ENCODE measurements at regions of chr2 and their contacts with region 1.

Region 1: DNA sequence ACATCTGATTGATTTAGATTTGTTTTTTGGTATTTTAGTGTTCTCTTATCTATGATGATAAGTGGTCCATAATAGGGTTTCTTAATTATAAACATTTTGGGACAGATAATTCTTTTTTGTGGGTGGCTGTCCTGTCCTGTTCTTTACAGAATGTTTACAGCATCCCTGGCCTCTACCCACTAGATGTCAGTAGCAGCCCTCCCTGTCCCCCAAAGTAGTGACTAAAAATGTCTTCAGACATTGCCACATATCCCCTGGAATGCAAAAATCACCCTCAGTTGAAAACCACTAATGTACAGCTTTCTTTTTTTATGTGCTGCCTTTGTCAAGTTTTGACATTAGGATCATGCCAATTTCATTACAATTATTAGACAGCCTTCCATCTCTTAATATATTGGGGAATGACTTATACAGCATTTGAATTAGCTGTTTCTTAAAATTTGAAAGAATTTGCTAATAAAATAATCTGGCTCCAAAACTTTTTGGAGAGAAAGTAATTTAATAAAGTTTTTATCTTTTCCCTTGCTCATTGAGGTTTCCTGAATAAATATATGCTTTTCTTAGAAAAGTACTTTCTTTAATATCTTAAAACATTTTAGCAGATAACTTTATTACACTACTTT is 19.5 kb downstream of the WIPF1 start:
- DNase-seq: no peak
- H3K4me3 ChIP-seq: no peak overlapping the region
- H3K27ac ChIP-seq: peak overlapping the region in 3 of 8 donors; percentile 4 to 34 (median 16)
- H3K4me1 ChIP-seq: peaks cover 5 to 99% (median 74%) of the 10 kb centered on the region in 6 donors
- H3K27me3 ChIP-seq: no peaks in the 10 kb centered on the region
- CTCF ChIP-seq: peak in 8 of 11 experiments; percentile 34 to 62 (median 49)
- POLR2A ChIP-seq: no peak

Region 2: GRCh38 chr2:174376967-174377366 is 201.1 kb before region 1 on chr2:
- intact Hi-C with region 1: no loop called
- DNase-seq: no peak
- H3K4me3 ChIP-seq: no peak overlapping the region
- H3K27ac ChIP-seq: no peak overlapping the region
- H3K4me1 ChIP-seq: peaks cover 0 to under 1% (median 0%) of the 10 kb centered on the region in 6 donors
- H3K27me3 ChIP-seq: no peaks in the 10 kb centered on the region
- CTCF ChIP-seq: no peak
- POLR2A ChIP-seq: no peak

Region 3: DNA sequence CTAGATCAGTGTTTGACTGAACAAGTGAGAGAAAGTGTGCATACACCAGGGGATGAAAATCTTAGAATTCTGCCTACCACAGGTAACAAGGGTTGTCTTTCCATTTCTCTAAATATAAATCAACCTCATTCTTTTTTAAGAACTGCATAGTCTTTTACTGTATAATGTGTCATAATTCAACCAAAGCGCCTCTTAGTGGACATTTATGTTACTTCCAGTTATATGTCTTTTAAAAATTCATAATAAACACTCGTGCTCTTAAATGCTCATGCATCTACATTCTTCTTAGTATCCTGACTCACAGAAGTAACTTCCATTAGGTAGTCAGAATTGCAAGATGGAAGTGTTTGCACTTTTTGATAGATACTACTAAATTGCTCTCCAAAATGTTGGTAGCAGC is 110.0 kb after region 1 on chr2:
- intact Hi-C with region 1: loop called (anchors 5 kb)
- DNase-seq: no peak
- H3K4me3 ChIP-seq: no peak overlapping the region
- H3K27ac ChIP-seq: no peak overlapping the region
- H3K4me1 ChIP-seq: peaks cover 8 to 45% (median 28%) of the 10 kb centered on the region in 6 donors
- H3K27me3 ChIP-seq: no peaks in the 10 kb centered on the region
- CTCF ChIP-seq: peak in 9 of 11 experiments; percentile 24 to 59 (median 52)
- POLR2A ChIP-seq: no peak

Region 4: GRCh38 chr2:174827371-174828369 is 249.6 kb after region 1 on chr2:
- intact Hi-C with region 1: no loop called
- DNase-seq: no peak
- H3K4me3 ChIP-seq: no peak overlapping the region
- H3K27ac ChIP-seq: peak overlapping the region in 6 of 8 donors; percentile 32 to 65 (median 52)
- H3K4me1 ChIP-seq: peaks cover 0 to 6% (median 0%) of the 10 kb centered on the region in 6 donors
- H3K27me3 ChIP-seq: no peaks in the 10 kb centered on the region
- CTCF ChIP-seq: no peak
- POLR2A ChIP-seq: no peak

Measured in spleen (tissue), 13 donors.